ENCODE measurements at regions of chr3 and their contacts with region 1.

Region 1: DNA sequence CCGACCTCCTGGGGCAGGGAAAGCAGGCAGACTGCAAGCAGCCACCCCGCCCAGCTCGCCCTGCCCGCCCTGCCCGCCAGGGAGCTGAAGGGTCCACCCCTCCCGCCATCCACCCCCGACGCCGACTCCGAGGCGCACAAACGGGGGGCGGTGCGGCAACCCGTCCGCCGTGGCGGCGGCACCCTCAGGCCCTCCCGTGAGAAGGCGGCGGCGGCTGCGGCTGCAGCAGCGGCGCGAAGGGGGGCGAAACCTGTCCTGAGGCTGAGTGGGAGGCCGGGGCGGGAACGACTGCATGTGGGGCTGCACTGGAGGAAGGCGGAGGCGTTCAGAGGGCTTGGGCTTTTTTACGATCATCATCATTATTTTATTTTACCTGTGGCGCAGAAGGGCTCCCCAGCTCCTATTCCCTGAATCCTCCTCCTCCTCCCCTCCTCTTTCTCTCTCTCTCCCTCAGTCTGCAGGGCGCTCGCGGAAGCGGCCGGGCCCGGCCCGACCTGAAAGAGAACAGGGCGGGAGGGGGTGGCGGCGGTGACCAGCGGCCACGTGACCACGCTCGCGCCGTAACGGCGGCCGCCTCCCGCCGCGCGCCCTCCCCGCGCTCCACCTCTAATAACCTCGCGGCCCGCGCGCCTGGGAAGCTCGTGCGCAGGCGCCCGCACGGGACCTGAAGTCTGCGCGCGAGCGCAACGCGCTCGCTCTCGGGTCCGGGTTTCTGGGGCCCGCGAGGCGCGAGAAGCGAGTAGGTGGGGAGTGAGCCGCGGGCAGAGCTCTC is at the start of gene TBC1D5:
- DNase-seq: peak; percentile 97
- ATAC-seq: peak; percentile 97
- H3K4me3 Mint-ChIP-seq: peak within 1 kb of the TSS; percentile 93
- H3K27ac Mint-ChIP-seq: peak within 1 kb of the TSS; percentile 93
- H3K4me1 Mint-ChIP-seq: peaks cover 40% of the 10 kb centered on the region
- H3K27me3 Mint-ChIP-seq: no peaks in the 10 kb centered on the region
- total RNA-seq, gene TBC1D5: 53.9 to 56.9 TPM

Region 2: DNA sequence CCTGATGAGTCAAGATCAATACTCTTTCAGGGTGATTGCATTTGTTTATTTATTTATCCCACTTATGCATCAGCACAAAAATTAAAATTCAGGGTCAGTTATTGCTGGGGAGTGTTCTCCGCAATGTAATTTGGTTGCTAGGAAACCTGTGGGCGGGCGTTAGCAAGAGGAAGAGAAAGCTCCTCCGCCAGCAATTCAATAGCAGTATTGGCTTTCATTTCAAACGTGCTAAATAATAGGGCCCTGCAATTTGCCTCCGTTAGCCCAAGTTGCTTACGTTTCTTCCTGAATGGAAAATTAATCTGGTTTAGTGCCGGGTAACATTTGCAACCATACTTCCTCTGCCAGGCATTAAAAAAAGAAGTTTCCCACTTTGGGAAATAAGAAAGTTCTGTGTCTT is 893.1 kb before region 1 on chr3:
- CTCF ChIA-PET with region 1: no interaction called
- POLR2A ChIA-PET with region 1: no interaction called
- intact Hi-C with region 1: loop called in 1 of 2 experiments (anchors 10 kb)
- DNase-seq: peak; percentile 78
- ATAC-seq: peak; percentile 69
- H3K4me3 Mint-ChIP-seq: peak overlapping the region; percentile 61
- H3K27ac Mint-ChIP-seq: peak overlapping the region; percentile 80
- H3K4me1 Mint-ChIP-seq: peaks cover 46% of the 10 kb centered on the region
- H3K27me3 Mint-ChIP-seq: no peaks in the 10 kb centered on the region

Region 3: GRCh38 chr3:17639765-17640164 is 102.5 kb before region 1 on chr3:
- CTCF ChIA-PET with region 1: no interaction called
- POLR2A ChIA-PET with region 1: no interaction called
- intact Hi-C with region 1: loop called in 1 of 2 experiments (anchors 2 kb)
- DNase-seq: no peak
- ATAC-seq: no peak
- H3K4me3 Mint-ChIP-seq: no peak overlapping the region
- H3K27ac Mint-ChIP-seq: no peak overlapping the region
- H3K4me1 Mint-ChIP-seq: peaks cover 30% of the 10 kb centered on the region
- H3K27me3 Mint-ChIP-seq: no peaks in the 10 kb centered on the region

Region 4: DNA sequence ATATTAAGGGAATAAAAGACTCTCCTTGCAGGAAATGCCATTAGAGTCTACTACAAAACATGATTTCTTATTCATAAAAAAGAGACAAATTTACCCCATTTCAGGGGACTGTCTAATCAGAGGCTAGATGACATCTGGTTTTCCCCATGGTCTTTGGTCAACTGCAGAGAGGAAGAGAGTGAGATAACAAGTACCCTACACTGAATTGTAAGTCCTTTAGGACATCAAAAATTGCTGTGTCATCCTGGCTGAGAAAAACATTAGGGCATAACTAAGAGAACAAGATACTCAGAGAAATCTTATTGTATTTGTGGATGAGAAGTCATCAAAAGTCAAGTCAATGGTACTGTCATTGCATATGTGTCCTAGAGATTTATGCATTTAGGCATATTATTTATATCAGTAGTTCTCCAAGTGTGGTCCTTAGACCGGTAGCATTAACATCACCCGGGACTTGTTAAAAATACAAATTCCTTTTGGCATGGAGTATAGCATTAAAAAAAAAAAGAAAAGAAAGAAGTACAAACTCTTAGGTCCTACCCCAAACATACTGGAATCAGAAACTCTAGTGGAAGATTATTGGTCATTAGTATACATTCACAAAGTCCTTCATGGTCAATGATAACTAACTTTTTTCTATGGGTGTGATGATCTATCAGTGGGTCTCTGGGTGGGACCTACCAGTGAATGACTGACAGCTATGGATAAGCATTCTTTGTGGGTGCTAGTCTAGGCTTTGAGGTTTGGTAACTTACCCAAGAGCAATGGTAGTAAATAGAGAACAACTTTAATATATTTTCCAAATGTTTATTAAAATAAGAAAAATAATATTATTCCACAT is 29.1 kb after region 1 on chr3:
- CTCF ChIA-PET with region 1: interaction called, 5 read pairs
- POLR2A ChIA-PET with region 1: interaction called, 10 read pairs
- intact Hi-C with region 1: loop called in 1 of 2 experiments (anchors 1 kb)
- DNase-seq: no peak
- ATAC-seq: no peak
- H3K4me3 Mint-ChIP-seq: no peak overlapping the region
- H3K27ac Mint-ChIP-seq: no peak overlapping the region
- H3K4me1 Mint-ChIP-seq: peaks cover 14% of the 10 kb centered on the region
- H3K27me3 Mint-ChIP-seq: peaks cover 13% of the 10 kb centered on the region

Region 5: GRCh38 chr3:17915341-17915740 is 173.0 kb after region 1 on chr3:
- CTCF ChIA-PET with region 1: no interaction called
- POLR2A ChIA-PET with region 1: no interaction called
- intact Hi-C with region 1: no loop called
- DNase-seq: no peak
- ATAC-seq: no peak
- H3K4me3 Mint-ChIP-seq: no peak overlapping the region
- H3K27ac Mint-ChIP-seq: no peak overlapping the region
- H3K4me1 Mint-ChIP-seq: no peaks in the 10 kb centered on the region
- H3K27me3 Mint-ChIP-seq: peaks cover 14% of the 10 kb centered on the region